ENCODE measurements at regions of chr9 and their contacts with region 1.

Region 1: GRCh38 chr9:137534256-137535117 is 15.7 kb downstream of the PNPLA7 start:
- DNase-seq: no peak
- ATAC-seq: peak; percentile 54
- H3K4me3 Mint-ChIP-seq: no peak overlapping the region
- H3K27ac Mint-ChIP-seq: peak overlapping the region; percentile 74
- H3K4me1 Mint-ChIP-seq: peaks cover 32% of the 10 kb centered on the region
- H3K27me3 Mint-ChIP-seq: no peaks in the 10 kb centered on the region

Region 2: GRCh38 chr9:137295238-137295811 is 239.2 kb before region 1 on chr9:
- CTCF ChIA-PET with region 1: no interaction called
- DNase-seq: peak; percentile 55
- ATAC-seq: peak; percentile 84
- H3K4me3 Mint-ChIP-seq: no peak overlapping the region
- H3K27ac Mint-ChIP-seq: no peak overlapping the region
- H3K4me1 Mint-ChIP-seq: peaks cover 9% of the 10 kb centered on the region
- H3K27me3 Mint-ChIP-seq: peaks cover 48% of the 10 kb centered on the region

Region 3: GRCh38 chr9:137465000-137465719 is 69.3 kb before region 1 on chr9:
- CTCF ChIA-PET with region 1: no interaction called
- DNase-seq: no peak
- ATAC-seq: no peak
- H3K4me3 Mint-ChIP-seq: no peak overlapping the region
- H3K27ac Mint-ChIP-seq: no peak overlapping the region
- H3K4me1 Mint-ChIP-seq: peaks cover 23% of the 10 kb centered on the region
- H3K27me3 Mint-ChIP-seq: peaks cover 15% of the 10 kb centered on the region

Region 4: DNA sequence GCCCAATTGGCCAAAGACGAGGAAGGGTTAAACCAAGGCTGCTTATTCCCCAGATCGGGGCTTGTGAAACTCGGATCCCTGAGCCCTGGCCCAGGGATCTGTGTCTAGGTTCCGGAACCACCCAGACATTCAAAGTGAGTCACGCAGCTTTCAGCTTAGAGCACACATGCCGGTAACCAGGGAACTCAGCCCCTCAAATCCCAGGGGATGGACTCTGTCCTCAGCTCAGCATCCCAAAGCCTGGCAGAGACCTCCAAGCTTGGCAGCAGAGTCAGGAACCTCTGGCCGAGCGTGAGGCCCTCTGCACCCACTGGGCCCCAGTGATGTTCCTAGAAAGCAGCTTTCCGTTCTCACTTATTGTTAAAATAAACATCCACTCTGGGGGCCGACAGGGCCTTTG is 10.6 kb after region 1 on chr9:
- CTCF ChIA-PET with region 1: interaction called, 17 read pairs
- DNase-seq: no peak
- ATAC-seq: no peak
- H3K4me3 Mint-ChIP-seq: no peak overlapping the region
- H3K27ac Mint-ChIP-seq: no peak overlapping the region
- H3K4me1 Mint-ChIP-seq: peaks cover 11% of the 10 kb centered on the region
- H3K27me3 Mint-ChIP-seq: no peaks in the 10 kb centered on the region

Region 5: DNA sequence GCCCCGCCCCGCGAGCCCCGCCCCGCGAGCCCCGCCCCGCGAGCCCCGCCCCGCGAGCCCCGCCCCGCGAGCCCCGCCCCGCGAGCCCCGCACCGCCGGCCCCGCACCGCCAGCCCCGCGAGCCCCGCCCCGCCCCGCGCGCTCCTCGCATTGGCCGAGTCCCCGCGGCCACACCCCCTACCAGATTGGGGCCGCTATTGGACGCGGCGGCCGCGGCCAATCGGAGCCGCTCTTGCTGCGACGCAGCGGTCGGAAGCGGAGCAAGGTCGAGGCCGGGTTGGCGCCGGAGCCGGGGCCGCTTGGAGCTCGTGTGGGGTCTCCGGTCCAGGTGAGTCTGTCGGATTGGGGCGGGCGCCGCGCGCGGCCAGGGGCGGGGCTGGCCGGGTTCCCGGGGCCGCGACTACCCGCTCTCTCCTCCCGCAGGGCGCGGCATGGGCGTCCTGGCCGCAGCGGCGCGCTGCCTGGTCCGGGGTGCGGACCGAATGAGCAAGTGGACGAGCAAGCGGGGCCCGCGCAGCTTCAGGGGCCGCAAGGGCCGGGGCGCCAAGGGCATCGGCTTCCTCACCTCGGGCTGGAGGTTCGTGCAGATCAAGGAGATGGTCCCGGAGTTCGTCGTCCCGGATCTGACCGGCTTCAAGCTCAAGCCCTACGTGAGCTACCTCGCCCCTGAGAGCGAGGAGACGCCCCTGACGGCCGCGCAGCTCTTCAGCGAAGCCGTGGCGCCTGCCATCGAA is 17.3 kb after region 1 on chr9 and contains the start of gene MRPL41:
- CTCF ChIA-PET with region 1: interaction called, 17 read pairs
- DNase-seq: peak; percentile 93
- ATAC-seq: peak; percentile 94
- H3K4me3 Mint-ChIP-seq: peak within 1 kb of the TSS; percentile 78
- H3K27ac Mint-ChIP-seq: peak within 1 kb of the TSS; percentile 77
- H3K4me1 Mint-ChIP-seq: peaks cover 17% of the 10 kb centered on the region
- H3K27me3 Mint-ChIP-seq: no peaks in the 10 kb centered on the region
- total RNA-seq, gene MRPL41: 57.9 to 58.3 TPM

Region 6: GRCh38 chr9:137618105-137619067 is 83.9 kb after region 1 on chr9 and contains the start of gene EHMT1:
- CTCF ChIA-PET with region 1: no interaction called
- DNase-seq: peak; percentile 91
- ATAC-seq: peak; percentile 88
- H3K4me3 Mint-ChIP-seq: peak within 1 kb of the TSS; percentile 84
- H3K27ac Mint-ChIP-seq: peak within 1 kb of the TSS; percentile 89
- H3K4me1 Mint-ChIP-seq: peaks cover 40% of the 10 kb centered on the region
- H3K27me3 Mint-ChIP-seq: no peaks in the 10 kb centered on the region
- total RNA-seq, gene EHMT1: 99.9 to 130 TPM